Natural killer cell (primary cell): ENCODE measurements at regions of chr3 and their contacts with region 1.

Region 1: DNA sequence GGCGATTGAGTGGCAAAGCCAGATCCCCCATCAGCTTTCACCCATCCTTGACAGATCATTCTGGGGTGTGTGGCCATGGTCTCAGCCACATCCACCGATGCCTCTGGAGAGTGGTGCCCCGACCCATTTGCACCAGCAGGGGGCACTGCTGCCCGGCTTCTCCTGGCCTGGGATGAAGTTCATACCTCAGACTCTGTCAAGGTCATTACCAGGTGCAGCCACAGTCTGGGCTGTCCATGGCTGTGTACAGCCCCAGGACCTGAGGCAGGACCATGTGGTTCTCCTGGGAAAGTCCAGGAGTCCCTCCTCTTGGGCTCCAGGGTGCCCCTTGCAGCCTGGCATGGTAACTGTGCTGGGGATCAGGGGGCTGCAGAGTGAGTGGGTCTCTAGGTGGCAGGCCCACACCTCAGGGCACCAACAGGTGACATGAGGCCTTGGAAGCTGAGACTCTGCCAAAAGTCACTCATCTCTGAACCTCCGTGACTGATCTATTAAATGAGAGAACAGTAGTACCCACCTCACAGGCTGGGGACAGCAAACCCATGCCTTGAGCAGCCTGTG is 67.2 kb downstream of the CACNA2D2 start:
- DNase-seq: peak; percentile 86 to 89
- ATAC-seq: peak; percentile 93 to 99 (median 98)
- H3K4me3 ChIP-seq: no peak overlapping the region
- H3K4me3 Mint-ChIP-seq: peak overlapping the region; percentile 29
- H3K27ac ChIP-seq: no peak overlapping the region
- H3K27ac Mint-ChIP-seq: peak overlapping the region; percentile 25 to 77
- H3K4me1 ChIP-seq: peaks cover 56% of the 10 kb centered on the region
- H3K4me1 Mint-ChIP-seq: peaks cover 47 to 79% of the 10 kb centered on the region in 2 donors
- H3K27me3 ChIP-seq: no peaks in the 10 kb centered on the region
- H3K27me3 Mint-ChIP-seq: no peaks in the 10 kb centered on the region
- CTCF ChIP-seq: peak; percentile 90

Region 2: GRCh38 chr3:50450209-50450921 is 14.2 kb after region 1 on chr3:
- intact Hi-C with region 1: loop called (anchors 1 kb)
- DNase-seq: peak; percentile 76 to 91
- ATAC-seq: peak; percentile 75 to 85 (median 83)
- H3K4me3 ChIP-seq: peak overlapping the region; percentile 36
- H3K4me3 Mint-ChIP-seq: peak overlapping the region; percentile 83
- H3K27ac ChIP-seq: peak overlapping the region; percentile 85
- H3K27ac Mint-ChIP-seq: peak overlapping the region; percentile 91 to 98
- H3K4me1 ChIP-seq: peaks cover 68% of the 10 kb centered on the region
- H3K4me1 Mint-ChIP-seq: peaks cover 46 to 77% of the 10 kb centered on the region in 2 donors
- H3K27me3 ChIP-seq: no peaks in the 10 kb centered on the region
- H3K27me3 Mint-ChIP-seq: no peaks in the 10 kb centered on the region
- CTCF ChIP-seq: no peak

Region 3: DNA sequence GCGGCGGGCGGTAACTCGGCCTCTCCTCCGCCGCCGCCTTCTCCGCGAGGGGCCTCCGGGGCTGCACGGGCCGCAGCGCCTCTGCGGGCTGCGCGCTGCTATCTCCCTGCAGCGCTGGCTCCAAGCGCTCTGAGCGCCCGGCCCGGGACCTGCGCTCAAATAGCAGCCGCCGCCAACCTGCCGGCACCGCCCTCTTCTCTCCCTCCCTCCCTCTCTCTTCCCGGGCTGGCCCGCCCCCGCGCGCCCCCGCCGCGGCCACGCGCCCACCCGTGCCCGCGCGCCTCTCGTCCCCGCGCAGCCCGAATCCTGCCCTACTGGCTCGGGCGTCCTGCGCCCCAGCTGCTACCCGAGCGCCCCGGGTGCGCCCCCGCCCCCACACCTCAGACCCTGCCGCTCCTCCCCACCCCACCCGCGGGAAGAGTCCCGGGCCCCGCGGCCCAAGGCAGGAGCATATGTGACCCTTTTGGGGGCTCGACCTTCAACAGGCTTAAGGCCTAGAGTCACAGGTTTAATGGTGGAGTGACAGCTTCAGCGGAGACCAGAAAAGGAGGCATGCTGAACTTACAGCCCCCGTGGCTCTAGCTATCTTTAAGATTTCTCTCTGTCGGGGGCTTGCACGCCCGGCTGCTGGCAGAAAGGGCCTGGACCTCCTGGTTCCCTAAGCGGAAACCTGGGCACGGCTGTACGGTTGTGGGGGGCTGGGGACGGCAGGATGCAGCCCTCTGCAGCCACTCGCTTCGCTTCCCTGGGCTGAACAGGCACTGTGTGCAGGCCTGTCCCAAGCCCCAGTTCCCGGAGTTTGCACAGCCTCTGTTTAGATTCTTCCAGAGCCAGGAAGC is 67.5 kb after region 1 on chr3 and contains the start of gene CACNA2D2:
- intact Hi-C with region 1: loop called (anchors 5 kb)
- DNase-seq: peak; percentile 83
- ATAC-seq: peak; percentile 91 to 92 (median 92)
- H3K4me3 ChIP-seq: peak within 1 kb of the TSS; percentile 52
- H3K4me3 Mint-ChIP-seq: peak within 1 kb of the TSS; percentile 84
- H3K27ac ChIP-seq: no peak within 1 kb of the TSS
- H3K27ac Mint-ChIP-seq: peak within 1 kb of the TSS in 1 of 2 donors; percentile 71
- H3K4me1 ChIP-seq: peaks cover 19% of the 10 kb centered on the region
- H3K4me1 Mint-ChIP-seq: peaks cover 19 to 43% of the 10 kb centered on the region in 2 donors
- H3K27me3 ChIP-seq: no peaks in the 10 kb centered on the region
- H3K27me3 Mint-ChIP-seq: peaks cover 0 to 2% of the 10 kb centered on the region in 2 donors
- CTCF ChIP-seq: no peak
- total RNA-seq, gene CACNA2D2: 36.5 to 56.4 (median 43.8) TPM

Region 4: DNA sequence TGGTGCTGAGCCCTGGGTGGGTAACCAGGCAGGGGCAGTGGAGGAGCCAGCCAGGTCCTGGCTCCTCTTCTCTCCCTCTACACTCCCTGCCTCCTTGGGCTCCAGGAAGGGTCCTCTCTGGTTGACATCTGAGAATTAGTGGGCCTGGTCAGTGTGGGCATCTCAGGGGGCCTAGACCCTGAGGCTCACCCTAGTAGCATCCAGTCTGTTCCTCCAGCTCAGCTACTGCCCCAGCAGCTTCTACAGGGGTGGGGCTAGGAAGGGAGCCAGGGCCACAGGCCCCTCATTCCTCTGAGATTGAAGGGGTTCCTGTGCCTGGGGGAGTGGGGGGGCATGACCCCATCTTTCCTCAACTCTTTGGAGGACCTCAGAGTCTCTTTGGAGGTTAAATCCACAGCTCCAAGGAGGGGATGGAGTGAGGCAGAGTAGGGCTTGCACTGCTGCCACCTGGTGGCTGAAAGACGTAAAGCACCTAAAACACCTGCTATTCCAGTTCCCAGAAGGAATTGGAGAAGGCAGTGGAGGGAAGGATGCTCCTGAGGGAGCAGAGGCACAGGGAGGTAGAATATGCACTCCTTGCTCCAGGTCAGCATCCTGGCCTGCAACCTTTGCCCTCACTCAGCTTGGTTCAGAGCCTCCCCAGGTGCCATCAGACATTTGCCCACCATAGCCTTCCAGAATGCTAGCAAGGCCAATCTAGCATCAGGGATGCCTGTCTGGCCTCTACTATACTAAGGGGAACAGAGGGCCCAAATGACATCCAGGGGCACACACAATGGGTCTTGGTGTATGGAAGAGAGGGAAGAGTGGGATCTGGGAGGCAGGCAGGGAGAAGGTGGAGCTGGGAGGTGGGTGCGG is 106.2 kb after region 1 on chr3:
- intact Hi-C with region 1: loop called (anchors 1 kb)
- DNase-seq: peak; percentile 63 to 81
- ATAC-seq: peak; percentile 51 to 86 (median 77)
- H3K4me3 ChIP-seq: no peak overlapping the region
- H3K4me3 Mint-ChIP-seq: no peak overlapping the region
- H3K27ac ChIP-seq: no peak overlapping the region
- H3K27ac Mint-ChIP-seq: no peak overlapping the region
- H3K4me1 ChIP-seq: peaks cover 24% of the 10 kb centered on the region
- H3K4me1 Mint-ChIP-seq: peaks cover 15 to 41% of the 10 kb centered on the region in 2 donors
- H3K27me3 ChIP-seq: no peaks in the 10 kb centered on the region
- H3K27me3 Mint-ChIP-seq: peaks cover 3 to 11% of the 10 kb centered on the region in 2 donors
- CTCF ChIP-seq: peak; percentile 91

Region 5: GRCh38 chr3:50550079-50550741 is 114.0 kb after region 1 on chr3:
- intact Hi-C with region 1: loop called (anchors 1 kb)
- DNase-seq: peak; percentile 75 to 79
- ATAC-seq: peak; percentile 60 to 80 (median 79)
- H3K4me3 ChIP-seq: no peak overlapping the region
- H3K4me3 Mint-ChIP-seq: no peak overlapping the region
- H3K27ac ChIP-seq: no peak overlapping the region
- H3K27ac Mint-ChIP-seq: peak overlapping the region in 1 of 2 donors; percentile 58
- H3K4me1 ChIP-seq: peaks cover 23% of the 10 kb centered on the region
- H3K4me1 Mint-ChIP-seq: peaks cover 9 to 33% of the 10 kb centered on the region in 2 donors
- H3K27me3 ChIP-seq: no peaks in the 10 kb centered on the region
- H3K27me3 Mint-ChIP-seq: no peaks in the 10 kb centered on the region
- CTCF ChIP-seq: peak; percentile 89